Left cardiac atrium (tissue), 4 donors: ENCODE measurements at regions of chr6 and their contacts with region 1.

Region 1: GRCh38 chr6:1604158-1605030 is 5.3 kb upstream of the FOXC1 start:
- DNase-seq: peak; percentile 83
- ATAC-seq: peak; percentile 91 to 92

Region 2: DNA sequence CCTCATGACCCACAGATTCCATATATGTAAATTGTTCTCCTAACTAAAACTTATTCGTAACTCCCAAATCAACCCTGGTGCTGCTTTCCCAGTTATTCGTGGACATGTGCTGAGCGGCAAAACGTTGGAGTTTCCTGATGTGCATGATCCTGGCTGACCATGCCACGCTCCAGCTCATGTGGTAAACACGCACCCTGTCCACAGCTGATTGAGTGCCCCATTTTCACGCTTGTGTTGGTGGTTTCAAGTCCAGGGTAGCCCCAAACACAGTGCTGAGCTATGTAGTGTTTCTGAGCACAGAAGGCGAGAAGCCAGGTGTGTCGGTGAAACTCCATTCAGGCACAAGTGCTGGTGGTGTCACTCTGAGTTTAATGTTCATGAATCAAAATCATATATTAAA is 13.8 kb before region 1 on chr6:
- intact Hi-C with region 1: no loop called
- DNase-seq: no peak
- ATAC-seq: no peak

Region 3: DNA sequence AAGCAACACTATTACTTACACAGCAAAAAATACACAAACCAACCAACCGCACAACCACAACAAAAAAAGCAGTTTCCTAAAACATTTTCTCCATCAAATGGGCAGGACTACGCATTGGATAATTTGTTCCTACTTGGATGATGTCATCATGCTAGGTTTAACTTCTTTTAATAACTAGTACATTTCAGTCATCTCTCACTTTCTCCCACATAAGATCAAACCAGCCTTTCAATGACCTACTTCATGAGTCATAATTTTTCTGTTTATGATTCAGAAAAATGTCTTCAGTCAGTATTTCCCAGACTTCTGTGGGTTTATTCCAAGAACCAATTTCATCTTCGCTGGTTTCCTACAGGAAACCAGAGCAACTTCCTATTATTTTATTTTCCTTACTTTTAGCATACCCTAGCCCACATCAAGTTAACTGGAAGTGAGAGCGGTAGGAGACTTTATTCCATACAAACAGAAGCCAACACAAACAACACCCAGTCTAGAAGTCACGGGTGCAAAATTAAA is 506.8 kb after region 1 on chr6:
- intact Hi-C with region 1: loop called in 1 of 2 experiments (anchors 5 kb)
- DNase-seq: no peak
- ATAC-seq: peak; percentile 57 to 80

Region 4: GRCh38 chr6:2353412-2354137 is 749.2 kb after region 1 on chr6:
- intact Hi-C with region 1: loop called in 1 of 2 experiments (anchors 5 kb)
- DNase-seq: peak; percentile 71
- ATAC-seq: peak; percentile 76 to 87

Region 5: GRCh38 chr6:2639896-2640295 is 1035.5 kb after region 1 on chr6:
- intact Hi-C with region 1: loop called (anchors 5 kb)
- DNase-seq: no peak
- ATAC-seq: no peak